Activated B cell treated with CpG ODN at 0.5 μM for 24 hours (primary cell): ENCODE measurements at regions of chr1 and their contacts with region 1.

Region 1: GRCh38 chr1:155989242-155990004 is 11.1 kb upstream of the ARHGEF2 start:
- DNase-seq: peak; percentile 73
- ATAC-seq: peak; percentile 99
- H3K4me3 Mint-ChIP-seq: no peak overlapping the region
- H3K27ac Mint-ChIP-seq: peak overlapping the region; percentile 70
- H3K4me1 Mint-ChIP-seq: peaks cover 22% of the 10 kb centered on the region
- H3K27me3 Mint-ChIP-seq: no peaks in the 10 kb centered on the region
- CTCF ChIP-seq: peak; percentile 43

Region 2: DNA sequence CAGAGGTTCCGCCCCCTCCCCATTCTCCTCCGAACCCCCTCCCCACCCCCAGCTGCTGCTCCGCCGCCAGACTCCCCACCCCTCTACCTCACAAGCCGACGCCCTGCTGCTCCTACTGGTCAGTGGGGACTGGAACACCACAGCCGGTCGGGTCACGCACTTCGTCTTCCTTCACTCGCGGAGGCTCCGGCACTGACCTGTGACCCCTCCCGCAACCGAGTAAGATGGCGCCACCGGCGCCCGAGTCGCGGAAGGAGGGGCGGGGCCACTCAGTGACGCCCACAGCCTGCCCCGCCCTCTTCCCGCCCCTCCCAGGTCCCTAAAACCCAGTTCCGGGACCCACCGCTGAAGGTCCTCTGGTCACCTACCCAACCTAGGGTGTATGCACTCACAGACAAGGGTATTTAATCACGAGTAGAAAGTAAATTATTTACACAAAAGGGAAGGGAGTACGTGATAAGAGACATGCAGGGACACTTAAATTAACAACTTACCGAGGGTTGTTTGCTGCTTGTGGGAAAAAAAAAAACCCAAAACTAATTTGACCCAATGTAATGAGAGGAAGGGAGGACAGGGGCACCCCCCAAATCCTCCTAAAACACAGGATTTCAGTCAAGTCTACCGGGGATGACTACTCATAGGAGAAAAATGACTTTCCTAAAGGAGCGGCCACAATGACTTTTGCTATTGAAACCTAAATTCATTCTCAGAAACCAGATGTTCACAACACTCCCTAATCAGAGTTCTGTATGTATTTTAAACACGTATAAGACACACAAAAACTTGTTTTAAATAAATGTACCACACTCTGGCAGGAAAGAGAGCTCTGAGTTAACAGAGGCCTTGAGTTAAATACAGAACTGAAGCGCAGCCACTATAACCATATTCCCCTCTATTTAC is 78.0 kb before region 1 on chr1 and contains the start of gene RIT1:
- CTCF ChIA-PET with region 1: no interaction called
- POLR2A ChIA-PET with region 1: no interaction called
- intact Hi-C with region 1: loop called (anchors 1 kb)
- DNase-seq: peak; percentile 74
- ATAC-seq: peak; percentile 97
- H3K4me3 Mint-ChIP-seq: peak within 1 kb of the TSS; percentile 99
- H3K27ac Mint-ChIP-seq: peak within 1 kb of the TSS; percentile 97
- H3K4me1 Mint-ChIP-seq: peaks cover 22% of the 10 kb centered on the region
- H3K27me3 Mint-ChIP-seq: no peaks in the 10 kb centered on the region
- CTCF ChIP-seq: no peak
- total RNA-seq, gene RIT1: 32.7 and 38.6 TPM in 2 replicates

Region 3: GRCh38 chr1:155961937-155962336 is 27.5 kb before region 1 on chr1:
- CTCF ChIA-PET with region 1: interaction called, 5 read pairs
- POLR2A ChIA-PET with region 1: interaction called, 3 read pairs
- intact Hi-C with region 1: loop called (anchors 1 kb)
- DNase-seq: no peak
- ATAC-seq: peak; percentile 53
- H3K4me3 Mint-ChIP-seq: peak overlapping the region; percentile 41
- H3K27ac Mint-ChIP-seq: peak overlapping the region; percentile 85
- H3K4me1 Mint-ChIP-seq: peaks cover 67% of the 10 kb centered on the region
- H3K27me3 Mint-ChIP-seq: no peaks in the 10 kb centered on the region
- CTCF ChIP-seq: no peak

Region 4: DNA sequence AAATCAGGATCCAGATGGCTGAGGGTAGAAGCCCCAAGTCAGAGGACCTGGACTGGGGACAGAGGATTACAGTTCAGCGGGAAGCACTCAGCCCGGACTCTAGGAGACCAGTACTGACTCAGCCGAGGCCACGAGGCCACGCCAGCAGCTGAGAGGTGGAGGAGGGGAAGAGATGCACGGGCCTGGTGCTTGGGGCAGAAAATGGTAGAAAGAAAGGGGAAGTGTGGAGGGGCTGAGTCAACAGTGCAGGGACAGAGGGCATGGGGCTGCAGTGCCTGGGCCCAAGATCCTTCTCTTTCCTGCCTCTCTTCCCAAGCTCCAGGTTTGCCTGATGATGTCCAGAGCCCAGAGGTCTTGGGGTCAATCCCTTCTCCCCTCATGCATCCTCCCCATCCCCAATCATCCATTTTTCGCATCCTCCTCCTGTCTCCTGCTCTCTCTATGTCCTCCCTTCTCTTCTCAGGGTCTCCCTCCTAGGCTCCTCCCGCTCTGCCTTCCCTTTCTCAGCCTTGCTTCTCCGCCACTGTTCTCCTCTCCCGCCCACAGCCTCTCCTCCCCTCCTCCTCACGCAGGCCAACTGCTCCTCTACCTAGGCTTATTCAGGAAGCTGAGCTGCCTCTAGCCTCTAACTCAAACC is 18.8 kb before region 1 on chr1:
- CTCF ChIA-PET with region 1: interaction called, 6 read pairs
- POLR2A ChIA-PET with region 1: interaction called, 26 read pairs
- intact Hi-C with region 1: loop called (anchors 2 kb)
- DNase-seq: peak; percentile 61
- ATAC-seq: peak; percentile 97
- H3K4me3 Mint-ChIP-seq: peak overlapping the region; percentile 73
- H3K27ac Mint-ChIP-seq: peak overlapping the region; percentile 90
- H3K4me1 Mint-ChIP-seq: peaks cover 98% of the 10 kb centered on the region
- H3K27me3 Mint-ChIP-seq: no peaks in the 10 kb centered on the region
- CTCF ChIP-seq: no peak